Gastrocnemius medialis (tissue), 4 donors: ENCODE measurements at regions of chr5 and their contacts with region 1.

Region 1: DNA sequence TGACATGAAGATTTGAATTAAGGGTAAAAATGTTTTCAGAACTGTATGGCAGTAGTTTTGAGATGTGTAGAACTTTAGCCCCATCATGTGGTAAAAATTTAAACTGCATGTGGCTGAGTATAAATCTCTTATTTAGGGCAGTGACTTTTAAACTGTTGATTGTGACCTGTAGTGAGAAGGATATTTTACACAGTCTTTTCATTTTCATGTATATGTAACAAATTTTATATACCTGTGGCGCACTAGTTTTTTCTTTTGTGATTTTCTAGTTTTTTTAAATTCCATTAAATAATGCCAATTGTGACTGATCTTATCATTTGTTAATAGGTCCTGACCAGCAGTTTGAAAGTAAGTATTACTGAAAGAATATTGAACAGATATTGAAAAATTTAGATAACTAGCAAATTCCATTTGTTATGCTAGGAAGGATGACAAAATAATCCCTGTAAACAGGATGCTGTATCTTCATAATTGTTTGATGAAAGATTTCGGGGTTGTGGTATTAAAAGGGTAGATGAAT is 47.2 kb downstream of the GPBP1 start:
- DNase-seq: no peak
- ATAC-seq: peak; percentile 72 to 78
- H3K4me3 ChIP-seq: no peak overlapping the region
- H3K27ac ChIP-seq: peak overlapping the region in 1 of 4 donors; percentile 44
- H3K4me1 ChIP-seq: no peaks in the 10 kb centered on the region
- H3K27me3 ChIP-seq: no peaks in the 10 kb centered on the region
- CTCF ChIP-seq: peak; percentile 80 to 98 (median 90)
- POLR2A ChIP-seq: no peak

Region 2: GRCh38 chr5:56270568-56271392 is 950.3 kb before region 1 on chr5:
- in situ Hi-C with region 1: loop called in 1 of 4 experiments (anchors 25 kb)
- intact Hi-C with region 1: no loop called
- DNase-seq: peak; percentile 37 to 58
- ATAC-seq: peak; percentile 80 to 91
- H3K4me3 ChIP-seq: no peak overlapping the region
- H3K27ac ChIP-seq: no peak overlapping the region
- H3K4me1 ChIP-seq: no peaks in the 10 kb centered on the region
- H3K27me3 ChIP-seq: no peaks in the 10 kb centered on the region
- CTCF ChIP-seq: peak; percentile 75 to 94 (median 87)
- POLR2A ChIP-seq: no peak

Region 3: GRCh38 chr5:56900858-56901578 is 320.1 kb before region 1 on chr5:
- in situ Hi-C with region 1: loop called (anchors 5 to 10 kb)
- intact Hi-C with region 1: loop called (anchors 1 kb)
- DNase-seq: no peak
- ATAC-seq: peak; percentile 58 to 84
- H3K4me3 ChIP-seq: no peak overlapping the region
- H3K27ac ChIP-seq: no peak overlapping the region
- H3K4me1 ChIP-seq: no peaks in the 10 kb centered on the region
- H3K27me3 ChIP-seq: no peaks in the 10 kb centered on the region
- CTCF ChIP-seq: peak; percentile 50 to 73 (median 66)
- POLR2A ChIP-seq: no peak

Region 4: DNA sequence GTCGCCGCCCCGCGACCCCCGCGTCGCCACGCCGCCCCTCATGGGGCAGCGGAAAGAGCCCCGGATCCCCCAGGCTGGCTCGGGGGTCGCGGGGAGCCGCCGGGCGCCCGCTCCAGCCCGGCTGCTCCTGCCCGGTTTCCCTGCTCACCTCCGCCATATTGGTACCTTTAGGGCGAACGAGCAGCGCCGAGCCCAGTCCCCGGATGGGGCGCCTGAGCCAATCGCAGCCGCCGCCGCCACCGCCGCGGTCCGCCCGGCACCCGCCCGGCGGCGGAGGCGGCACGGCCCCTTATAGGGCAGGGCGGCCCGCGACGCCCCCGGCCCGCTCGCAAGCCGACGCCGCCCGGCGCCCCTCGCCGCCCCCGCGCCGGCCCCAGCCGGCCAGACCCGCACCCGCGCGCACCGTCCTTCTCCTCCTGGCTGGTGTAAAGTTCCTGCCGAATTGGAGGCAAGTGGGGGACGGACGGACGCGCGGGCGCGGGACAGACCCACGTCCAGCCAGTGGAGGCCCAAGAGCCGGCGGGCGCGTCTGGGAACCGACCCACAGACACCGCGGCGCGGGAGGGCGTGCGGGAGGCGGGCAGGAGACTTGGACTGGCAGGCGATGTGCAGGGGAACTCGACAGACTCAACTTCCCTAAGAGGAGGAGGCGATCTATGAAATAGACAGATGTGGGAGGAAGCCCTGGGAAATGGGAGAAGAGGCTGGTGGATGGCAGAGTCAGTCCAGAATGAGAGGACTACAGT is 269.0 kb before region 1 on chr5 and contains the start of gene MIER3:
- in situ Hi-C with region 1: no loop called
- intact Hi-C with region 1: loop called (anchors 2 kb)
- DNase-seq: peak; percentile 66 to 67
- ATAC-seq: peak; percentile 93 to 94
- H3K4me3 ChIP-seq: peak within 1 kb of the TSS; percentile 62 to 90 (median 78)
- H3K27ac ChIP-seq: peak within 1 kb of the TSS; percentile 76 to 83 (median 79)
- H3K4me1 ChIP-seq: peaks cover 0 to 15% of the 10 kb centered on the region in 2 donors
- H3K27me3 ChIP-seq: no peaks in the 10 kb centered on the region
- CTCF ChIP-seq: no peak
- POLR2A ChIP-seq: peak; percentile 21 to 31
- total RNA-seq, gene MIER3: 12.2 to 33.4 (median 20.4) TPM